H1 (cell line): ENCODE measurements at regions of chr12 and their contacts with region 1.

Region 1: DNA sequence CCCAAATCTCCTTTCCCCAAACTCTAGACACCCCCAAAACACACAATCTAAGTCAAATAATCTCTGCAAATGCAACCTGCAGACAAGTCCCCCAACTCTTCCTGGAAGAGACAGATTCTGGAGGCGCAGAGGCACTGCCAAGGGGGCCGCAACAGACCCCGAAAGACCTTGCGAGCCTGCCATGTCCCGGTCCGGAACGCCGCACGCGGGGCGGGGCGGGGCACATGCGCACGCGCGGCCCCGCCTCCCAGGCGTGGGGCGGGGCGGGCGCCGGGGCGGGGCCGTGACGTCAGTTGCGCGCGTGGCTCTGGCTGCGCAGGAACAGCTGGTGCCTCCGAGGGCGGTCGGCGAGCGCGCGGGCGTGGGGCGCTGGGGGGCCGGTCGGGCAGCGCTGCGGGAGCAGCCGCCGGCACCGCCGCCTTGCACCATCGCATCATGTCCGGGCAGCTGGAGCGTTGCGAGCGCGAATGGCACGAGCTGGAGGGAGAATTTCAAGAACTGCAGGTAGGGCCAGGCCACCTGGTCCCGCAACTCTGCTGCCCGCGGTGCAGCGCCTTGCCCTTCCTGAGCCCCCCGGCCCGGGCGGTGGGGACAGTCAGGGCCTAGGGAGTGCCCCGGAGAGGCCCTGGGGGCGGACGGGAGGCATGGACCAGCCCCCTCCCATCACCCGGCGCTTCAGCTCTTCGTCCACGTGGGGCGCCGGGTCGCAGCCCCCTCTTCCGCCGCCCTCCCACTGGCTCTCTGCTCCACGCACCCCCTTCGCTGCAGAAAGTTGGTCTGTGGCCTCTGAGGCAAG is at the start of gene TMEM120B:
- DNase-seq: peak in 1 of 2 experiments; percentile 88
- H3K4me3 ChIP-seq: peak within 1 kb of the TSS; percentile 79 to 91 (median 87)
- H3K27ac ChIP-seq: no peak within 1 kb of the TSS
- H3K4me1 ChIP-seq: peaks cover 0 to 14% (median 4%) of the 10 kb centered on the region in 4 experiments; a peak in 5 of 7 replicates
- H3K27me3 ChIP-seq: no peaks in the 10 kb centered on the region
- CTCF ChIP-seq: peak in 2 of 3 experiments; percentile 26 to 32; a peak in 2 of 4 replicates
- EP300 ChIP-seq: no peak
- POLR2A ChIP-seq: peak in 1 of 2 experiments; percentile 52; a peak in 1 of 3 replicates
- RAD21 ChIP-seq: no peak
- total RNA-seq, gene TMEM120B: 26.0 and 29.1 TPM in 2 replicates

Region 2: DNA sequence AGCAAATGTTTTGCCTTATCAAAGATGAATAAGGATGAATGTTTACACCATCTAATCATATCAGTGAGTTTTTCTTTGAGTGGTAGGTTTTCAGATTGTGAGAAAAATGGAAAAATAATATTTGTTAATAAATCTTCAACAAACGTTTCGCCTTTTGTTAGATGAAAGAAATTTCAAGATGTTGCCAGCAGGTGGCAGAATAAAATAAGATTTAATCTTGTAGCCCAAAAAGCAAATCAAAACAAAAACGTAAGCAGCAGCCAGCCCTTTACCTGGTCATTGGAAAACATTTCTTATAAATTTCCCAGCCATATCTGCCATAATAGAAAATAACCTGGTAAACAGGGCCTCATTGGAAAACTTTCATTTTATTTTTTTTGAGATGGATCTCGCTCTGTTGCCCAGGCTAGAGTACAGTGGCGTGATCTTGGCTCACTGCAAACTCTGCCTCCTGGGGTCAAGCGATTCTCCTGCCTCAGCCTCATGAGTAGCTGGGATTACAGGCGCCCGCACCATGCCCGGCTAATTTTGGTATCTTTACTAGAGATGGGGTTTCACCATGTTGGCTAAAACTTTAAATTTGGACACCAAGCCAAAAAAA is 15.5 kb before region 1 on chr12:
- CTCF ChIA-PET with region 1: interaction called, 16 read pairs
- POLR2A ChIA-PET with region 1: interaction called, 10 read pairs
- DNase-seq: no peak
- H3K4me3 ChIP-seq: no peak overlapping the region
- H3K27ac ChIP-seq: no peak overlapping the region
- H3K4me1 ChIP-seq: no peaks in the 10 kb centered on the region
- H3K27me3 ChIP-seq: no peaks in the 10 kb centered on the region
- CTCF ChIP-seq: peak in 2 of 3 experiments; percentile 12 to 31; a peak in 2 of 4 replicates
- EP300 ChIP-seq: no peak
- POLR2A ChIP-seq: no peak
- RAD21 ChIP-seq: peak; percentile 57